Activated T-helper 2 cell treated with anti-CD3 and anti-CD28 coated beads, Interferon-gamma antibody, Interleukin-2, Interleukin-4, amounts not matched to agents 10 μg/mL and 5 μg/mL and 100 μg/mL, durations not matched to agents 14 hours and 24 hours and 36 hours (primary cell): ENCODE measurements at regions of chrX and their contacts with region 1.

Region 1: DNA sequence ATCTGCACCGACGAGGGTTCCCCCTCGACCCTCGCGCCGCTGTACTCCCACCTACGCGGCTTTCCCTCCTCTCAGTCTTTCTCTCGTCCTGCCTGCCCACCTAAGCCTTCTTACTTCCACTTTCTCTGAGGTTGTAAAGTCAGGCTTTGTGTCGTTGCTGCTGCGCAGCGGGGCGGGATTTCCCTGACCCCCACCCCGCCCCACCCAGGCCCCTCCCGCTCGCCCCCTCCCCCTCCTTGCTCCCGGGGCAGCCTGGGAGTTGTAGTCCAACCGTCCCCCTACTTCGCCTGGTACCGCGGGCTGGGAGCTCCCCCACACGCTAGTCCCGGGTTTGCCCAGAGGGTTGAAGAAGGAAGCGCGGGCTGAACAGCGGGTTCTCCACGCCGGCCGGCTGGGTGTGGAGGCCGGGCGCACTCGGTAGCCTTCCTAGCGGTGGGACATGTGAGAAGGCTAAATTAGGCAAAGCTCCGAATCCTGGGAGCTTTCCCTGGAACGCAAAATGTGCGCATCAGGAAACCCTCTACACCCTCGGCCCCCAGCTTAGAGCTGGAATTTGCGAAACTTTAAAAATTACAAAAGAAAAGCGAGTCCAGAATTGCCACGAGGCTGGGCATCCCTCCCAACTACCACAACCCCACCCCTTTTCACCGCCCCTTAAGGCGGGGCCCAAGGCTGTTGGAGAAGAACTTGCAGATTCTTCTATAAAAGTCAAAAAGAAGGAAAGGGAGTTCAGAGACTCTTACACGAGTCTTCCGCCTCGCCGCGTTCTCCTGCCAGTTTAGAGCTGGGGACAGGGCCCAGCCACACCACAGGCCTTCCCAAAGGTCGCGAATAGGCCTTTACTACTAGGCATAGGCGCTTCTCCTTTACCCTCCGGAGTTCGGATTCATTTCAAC is at the start of gene ATP11C:
- DNase-seq: peak; percentile 69
- H3K4me3 Mint-ChIP-seq: peak within 1 kb of the TSS; percentile 79
- H3K27ac Mint-ChIP-seq: peak within 1 kb of the TSS; percentile 88
- H3K4me1 Mint-ChIP-seq: peaks cover 13% of the 10 kb centered on the region
- H3K27me3 Mint-ChIP-seq: peaks cover 2% of the 10 kb centered on the region
- total RNA-seq, gene ATP11C: 19.3 and 23.8 TPM in 2 replicates

Region 2: DNA sequence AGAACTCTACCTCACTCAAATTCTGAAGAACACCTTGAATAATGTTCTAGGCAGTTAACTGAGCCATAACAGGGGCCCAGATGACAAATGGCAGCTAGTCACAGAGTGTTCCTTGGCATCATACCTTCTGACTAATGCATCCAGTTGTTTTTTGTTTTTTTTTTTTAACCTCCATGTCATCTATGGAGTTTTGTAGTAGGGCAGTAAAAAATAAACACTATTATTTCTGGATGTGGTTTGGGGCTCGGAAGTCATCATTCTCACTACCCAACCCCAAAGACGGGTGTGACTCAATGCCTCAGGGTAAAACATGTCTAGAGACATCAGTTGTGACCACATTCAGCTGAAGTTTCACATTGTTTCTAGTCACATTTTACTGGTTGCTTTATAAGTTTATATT is 194.0 kb before region 1 on chrX:
- intact Hi-C with region 1: loop called (anchors 1 kb)
- DNase-seq: peak; percentile 10
- H3K4me3 Mint-ChIP-seq: no peak overlapping the region
- H3K27ac Mint-ChIP-seq: peak overlapping the region; percentile 35
- H3K4me1 Mint-ChIP-seq: peaks cover 15% of the 10 kb centered on the region
- H3K27me3 Mint-ChIP-seq: no peaks in the 10 kb centered on the region

Region 3: GRCh38 chrX:139766545-139766983 is 166.6 kb before region 1 on chrX:
- intact Hi-C with region 1: loop called (anchors 2 kb)
- DNase-seq: peak; percentile 20
- H3K4me3 Mint-ChIP-seq: no peak overlapping the region
- H3K27ac Mint-ChIP-seq: no peak overlapping the region
- H3K4me1 Mint-ChIP-seq: peaks cover 2% of the 10 kb centered on the region
- H3K27me3 Mint-ChIP-seq: no peaks in the 10 kb centered on the region

Region 4: GRCh38 chrX:139909712-139910111 is 23.4 kb before region 1 on chrX:
- intact Hi-C with region 1: loop called (anchors 2 kb)
- DNase-seq: no peak
- H3K4me3 Mint-ChIP-seq: peak overlapping the region; percentile 51
- H3K27ac Mint-ChIP-seq: no peak overlapping the region
- H3K4me1 Mint-ChIP-seq: peaks cover 30% of the 10 kb centered on the region
- H3K27me3 Mint-ChIP-seq: no peaks in the 10 kb centered on the region

Region 5: GRCh38 chrX:140091125-140091886 is 158.2 kb after region 1 on chrX:
- intact Hi-C with region 1: no loop called
- DNase-seq: peak; percentile 8
- H3K4me3 Mint-ChIP-seq: peak overlapping the region; percentile 33
- H3K27ac Mint-ChIP-seq: no peak overlapping the region
- H3K4me1 Mint-ChIP-seq: peaks cover 2% of the 10 kb centered on the region
- H3K27me3 Mint-ChIP-seq: peaks cover 25% of the 10 kb centered on the region